AG04450 (cell line): ENCODE measurements at regions of chr12 and their contacts with region 1.

Region 1: DNA sequence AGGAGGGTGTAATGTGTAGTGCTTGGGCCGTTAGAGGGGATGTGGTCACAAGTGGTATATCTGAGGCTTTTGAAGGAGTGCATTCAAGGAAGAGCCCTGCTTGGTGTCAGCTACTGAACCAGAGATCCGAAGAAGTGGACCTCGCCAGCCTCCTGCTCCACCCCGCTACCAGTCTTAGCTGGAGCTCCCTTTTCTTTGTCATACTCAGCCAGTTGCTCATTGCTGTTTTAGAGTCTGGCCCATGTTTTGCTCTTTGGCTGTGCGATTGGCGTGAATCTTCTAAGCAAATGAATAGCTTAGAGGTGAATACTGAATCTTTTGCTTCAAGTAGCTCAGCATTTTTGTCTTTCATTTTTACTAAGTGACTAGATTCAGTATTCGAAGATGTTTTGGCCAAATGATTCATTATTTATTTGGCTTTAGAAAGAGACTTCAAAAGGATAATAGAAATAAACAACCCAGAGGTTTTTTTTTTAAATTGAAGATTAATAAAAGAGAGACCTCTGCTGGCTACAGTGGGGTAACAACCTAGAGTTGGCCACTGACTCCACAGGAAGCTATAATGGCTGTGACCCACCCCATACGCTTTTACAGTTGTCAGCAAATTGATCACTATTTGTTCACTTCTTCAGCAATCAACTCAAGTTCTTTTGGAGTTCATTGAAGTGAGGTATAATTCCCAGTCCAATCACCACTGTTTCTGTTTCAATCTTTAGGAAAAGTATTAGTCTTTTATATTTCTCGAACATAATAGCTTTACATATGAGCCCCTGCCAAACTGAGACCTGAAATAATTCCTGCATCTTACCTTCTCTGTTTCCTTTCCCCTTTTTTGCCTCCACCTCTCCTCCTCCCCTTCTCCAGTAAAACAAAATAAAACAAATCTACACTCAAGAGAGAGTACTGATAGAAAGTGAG is 19.9 kb downstream of the CDKN1B start:
- DNase-seq: no peak
- H3K4me3 ChIP-seq: peak overlapping the region; percentile 43
- H3K27ac ChIP-seq: peak overlapping the region; percentile 83
- H3K27me3 ChIP-seq: no peaks in the 10 kb centered on the region
- CTCF ChIP-seq: peak; percentile 62

Region 2: DNA sequence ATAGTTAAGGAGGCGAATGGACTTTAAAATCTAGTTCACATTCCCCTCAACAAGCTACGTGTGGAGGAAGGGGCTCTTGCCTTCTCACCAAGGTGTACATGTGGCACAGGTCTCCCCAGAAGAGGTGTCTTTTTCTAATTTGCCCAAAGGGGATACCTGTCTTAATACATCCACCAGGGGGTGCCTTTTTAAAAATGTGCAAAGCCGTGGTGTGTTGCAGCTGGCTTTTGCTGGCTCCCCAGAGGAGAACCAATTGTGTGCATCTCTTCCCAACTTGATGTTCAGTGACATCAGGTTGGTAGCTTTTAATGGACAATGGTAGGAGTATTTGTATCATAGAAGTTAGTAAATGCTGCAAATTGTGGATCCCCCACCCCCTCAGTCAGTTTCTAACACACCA is 91.5 kb before region 1 on chr12:
- CTCF ChIA-PET with region 1: interaction called, 11 read pairs
- POLR2A ChIA-PET with region 1: no interaction called
- DNase-seq: no peak
- H3K4me3 ChIP-seq: no peak overlapping the region
- H3K27ac ChIP-seq: peak overlapping the region; percentile 22
- H3K27me3 ChIP-seq: no peaks in the 10 kb centered on the region
- CTCF ChIP-seq: peak; percentile 60

Region 3: DNA sequence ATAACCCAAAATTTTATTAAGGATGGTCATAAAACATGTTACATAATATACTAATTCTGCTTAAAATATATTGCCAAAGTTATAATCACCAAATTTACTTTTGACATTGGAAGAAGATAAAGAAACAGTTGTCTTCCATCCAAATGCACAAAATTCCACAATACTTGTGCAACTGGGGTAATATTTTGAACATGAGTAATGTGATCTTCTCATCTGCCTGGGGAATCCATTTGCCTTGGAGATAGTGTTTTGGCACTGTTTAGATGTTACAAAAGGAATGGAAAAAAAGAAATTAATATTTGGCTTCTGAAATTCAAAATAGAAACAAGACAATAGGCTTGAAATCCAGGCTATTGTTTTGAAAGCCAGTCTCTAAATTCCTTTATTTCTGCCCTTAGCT is 50.1 kb before region 1 on chr12:
- CTCF ChIA-PET with region 1: no interaction called
- POLR2A ChIA-PET with region 1: no interaction called
- DNase-seq: no peak
- H3K4me3 ChIP-seq: no peak overlapping the region
- H3K27ac ChIP-seq: no peak overlapping the region
- H3K27me3 ChIP-seq: peaks cover 10% of the 10 kb centered on the region
- CTCF ChIP-seq: no peak

Region 4: GRCh38 chr12:12724661-12725545 is 12.1 kb before region 1 on chr12:
- CTCF ChIA-PET with region 1: interaction called, 34 read pairs
- POLR2A ChIA-PET with region 1: interaction called, 54 read pairs
- DNase-seq: peak; percentile 99
- H3K4me3 ChIP-seq: peak overlapping the region; percentile 86
- H3K27ac ChIP-seq: peak overlapping the region; percentile 98
- H3K27me3 ChIP-seq: no peaks in the 10 kb centered on the region
- CTCF ChIP-seq: no peak

Region 5: DNA sequence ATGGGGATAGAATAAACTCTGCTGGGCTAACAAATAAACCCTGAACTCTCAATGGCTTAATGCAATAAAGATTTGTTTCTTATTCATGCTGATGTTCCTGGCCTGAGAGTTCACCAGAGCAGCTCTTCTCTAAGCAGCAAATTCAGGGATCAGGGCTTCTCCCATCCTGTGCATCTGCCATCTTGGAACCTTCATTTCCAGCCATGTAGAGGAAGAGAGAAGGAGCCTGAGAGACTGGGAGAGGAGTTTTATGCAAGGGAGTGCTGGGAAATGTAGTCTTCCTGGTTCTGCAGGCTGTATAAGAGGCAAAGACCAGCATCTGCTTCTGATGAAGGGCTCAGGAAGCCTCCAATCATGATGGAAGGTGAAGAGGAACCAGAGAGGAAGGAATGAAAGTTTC is 27.8 kb after region 1 on chr12:
- CTCF ChIA-PET with region 1: interaction called, 10 read pairs
- POLR2A ChIA-PET with region 1: no interaction called
- DNase-seq: no peak
- H3K4me3 ChIP-seq: no peak overlapping the region
- H3K27ac ChIP-seq: no peak overlapping the region
- H3K27me3 ChIP-seq: no peaks in the 10 kb centered on the region
- CTCF ChIP-seq: no peak

Region 6: GRCh38 chr12:12786716-12787601 is 49.9 kb after region 1 on chr12:
- CTCF ChIA-PET with region 1: interaction called, 18 read pairs
- POLR2A ChIA-PET with region 1: interaction called, 4 read pairs
- DNase-seq: no peak
- H3K4me3 ChIP-seq: peak overlapping the region; percentile 63
- H3K27ac ChIP-seq: peak overlapping the region; percentile 84
- H3K27me3 ChIP-seq: no peaks in the 10 kb centered on the region
- CTCF ChIP-seq: no peak